ENCODE measurements at regions of chrX and their contacts with region 1.

Region 1: GRCh38 chrX:1673337-1673736 is 58.5 kb downstream of the ASMT start:
- DNase-seq: no peak
- H3K4me3 Mint-ChIP-seq: no peak overlapping the region
- H3K27ac Mint-ChIP-seq: no peak overlapping the region
- H3K4me1 Mint-ChIP-seq: peaks cover under 1% of the 10 kb centered on the region
- H3K27me3 Mint-ChIP-seq: no peaks in the 10 kb centered on the region

Region 2: DNA sequence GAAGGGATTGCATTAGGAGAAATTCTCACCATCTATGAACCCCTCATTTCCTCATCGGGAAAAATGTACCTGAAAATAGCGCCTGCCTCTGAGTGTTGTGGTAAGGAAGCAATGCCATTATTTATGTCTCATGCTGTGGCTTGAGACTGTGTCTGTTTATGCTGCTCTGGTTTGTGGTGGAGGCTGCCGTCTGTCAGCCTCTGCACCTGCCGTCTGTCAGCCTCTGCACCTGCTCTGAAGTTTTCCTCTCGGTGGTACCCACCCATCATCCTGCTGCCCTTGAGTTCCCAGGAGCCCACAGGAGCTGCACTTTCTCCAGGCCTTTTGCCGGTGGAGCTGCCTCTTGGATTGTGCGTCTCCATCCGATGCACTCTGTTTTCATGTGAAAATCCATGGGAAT is 1218.1 kb before region 1 on chrX:
- intact Hi-C with region 1: no loop called
- DNase-seq: no peak
- H3K4me3 Mint-ChIP-seq: no peak overlapping the region
- H3K27ac Mint-ChIP-seq: no peak overlapping the region
- H3K4me1 Mint-ChIP-seq: no peaks in the 10 kb centered on the region
- H3K27me3 Mint-ChIP-seq: no peaks in the 10 kb centered on the region

Region 3: GRCh38 chrX:1686642-1687041 is 13.3 kb after region 1 on chrX:
- intact Hi-C with region 1: no loop called
- DNase-seq: no peak
- H3K4me3 Mint-ChIP-seq: no peak overlapping the region
- H3K27ac Mint-ChIP-seq: no peak overlapping the region
- H3K4me1 Mint-ChIP-seq: peaks cover 17% of the 10 kb centered on the region
- H3K27me3 Mint-ChIP-seq: no peaks in the 10 kb centered on the region

Region 4: DNA sequence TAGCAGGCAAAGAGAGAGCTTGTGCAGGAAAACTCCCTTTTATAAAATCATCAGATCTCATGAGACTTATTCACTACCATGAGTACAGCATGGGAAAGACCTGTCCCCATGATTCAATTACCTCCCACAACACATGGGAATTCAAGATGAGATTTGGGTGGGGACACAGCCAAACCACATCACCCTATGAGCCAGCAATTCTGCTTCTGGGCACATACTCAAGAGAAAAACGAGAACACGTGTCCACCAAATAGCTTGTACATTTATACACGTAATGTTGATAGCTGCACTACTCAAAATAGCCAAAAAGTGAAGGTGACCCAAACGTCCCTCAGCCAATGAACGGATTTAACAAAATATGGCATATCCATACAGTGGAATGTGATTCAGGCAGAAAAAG is 921.9 kb after region 1 on chrX:
- intact Hi-C with region 1: loop called (anchors 1 kb)
- DNase-seq: no peak
- H3K4me3 Mint-ChIP-seq: no peak overlapping the region
- H3K27ac Mint-ChIP-seq: no peak overlapping the region
- H3K4me1 Mint-ChIP-seq: peaks cover 18% of the 10 kb centered on the region
- H3K27me3 Mint-ChIP-seq: no peaks in the 10 kb centered on the region

Region 5: GRCh38 chrX:2627272-2627867 is 954.0 kb after region 1 on chrX:
- intact Hi-C with region 1: loop called (anchors 1 kb)
- DNase-seq: peak; percentile 25
- H3K4me3 Mint-ChIP-seq: no peak overlapping the region
- H3K27ac Mint-ChIP-seq: peak overlapping the region; percentile 10
- H3K4me1 Mint-ChIP-seq: peaks cover 28% of the 10 kb centered on the region
- H3K27me3 Mint-ChIP-seq: no peaks in the 10 kb centered on the region

Measured in activated T-helper 1 cell treated with anti-CD3 and anti-CD28 coated beads, Interleukin-12 subunit alpha, Interleukin-12 subunit beta, Interleukin-2, Interleukin-4 antibody, amounts not matched to agents 30 ng/mL and 10 ng/mL and 1 ng/mL, durations not matched to agents 14 hours and 24 hours and 36 hours (primary cell).